T-cell (primary cell): ENCODE measurements at regions of chr2 and their contacts with region 1.

Region 1: GRCh38 chr2:27860111-27860510 is 30.1 kb downstream of the RBKS start:
- DNase-seq: no peak
- ATAC-seq: no peak
- H3K4me3 ChIP-seq: no peak overlapping the region
- H3K4me3 Mint-ChIP-seq: no peak overlapping the region
- H3K27ac ChIP-seq: no peak overlapping the region
- H3K27ac Mint-ChIP-seq: no peak overlapping the region
- H3K4me1 ChIP-seq: no peaks in the 10 kb centered on the region
- H3K4me1 Mint-ChIP-seq: peaks cover 0 to 13% (median 12%) of the 10 kb centered on the region in 3 donors
- H3K27me3 ChIP-seq: no peaks in the 10 kb centered on the region
- H3K27me3 Mint-ChIP-seq: no peaks in the 10 kb centered on the region

Region 2: GRCh38 chr2:27683390-27684071 is 176.6 kb before region 1 on chr2:
- CTCF ChIA-PET with region 1: no interaction called
- POLR2A ChIA-PET with region 1: no interaction called
- DNase-seq: peak; percentile 53 to 97 (median 81)
- ATAC-seq: peak; percentile 82 to 94 (median 90)
- H3K4me3 ChIP-seq: no peak overlapping the region
- H3K4me3 Mint-ChIP-seq: no peak overlapping the region
- H3K27ac ChIP-seq: peak overlapping the region; percentile 45
- H3K27ac Mint-ChIP-seq: peak overlapping the region; percentile 62 to 78
- H3K4me1 ChIP-seq: peaks cover 8 to 23% of the 10 kb centered on the region in 2 experiments
- H3K4me1 Mint-ChIP-seq: peaks cover 15 to 25% (median 15%) of the 10 kb centered on the region in 3 donors
- H3K27me3 ChIP-seq: no peaks in the 10 kb centered on the region
- H3K27me3 Mint-ChIP-seq: no peaks in the 10 kb centered on the region

Region 3: GRCh38 chr2:27798948-27799645 is 61.0 kb before region 1 on chr2:
- CTCF ChIA-PET with region 1: interaction called in 1 of 2 experiments, 10 read pairs
- POLR2A ChIA-PET with region 1: no interaction called
- DNase-seq: no peak
- ATAC-seq: no peak
- H3K4me3 ChIP-seq: no peak overlapping the region
- H3K4me3 Mint-ChIP-seq: no peak overlapping the region
- H3K27ac ChIP-seq: no peak overlapping the region
- H3K27ac Mint-ChIP-seq: no peak overlapping the region
- H3K4me1 ChIP-seq: no peaks in the 10 kb centered on the region
- H3K4me1 Mint-ChIP-seq: no peaks in the 10 kb centered on the region
- H3K27me3 ChIP-seq: no peaks in the 10 kb centered on the region
- H3K27me3 Mint-ChIP-seq: no peaks in the 10 kb centered on the region

Region 4: GRCh38 chr2:27838502-27838901 is 21.6 kb before region 1 on chr2:
- CTCF ChIA-PET with region 1: no interaction called
- POLR2A ChIA-PET with region 1: no interaction called
- DNase-seq: no peak
- ATAC-seq: no peak
- H3K4me3 ChIP-seq: no peak overlapping the region
- H3K4me3 Mint-ChIP-seq: no peak overlapping the region
- H3K27ac ChIP-seq: no peak overlapping the region
- H3K27ac Mint-ChIP-seq: no peak overlapping the region
- H3K4me1 ChIP-seq: no peaks in the 10 kb centered on the region
- H3K4me1 Mint-ChIP-seq: no peaks in the 10 kb centered on the region
- H3K27me3 ChIP-seq: no peaks in the 10 kb centered on the region
- H3K27me3 Mint-ChIP-seq: no peaks in the 10 kb centered on the region

Region 5: DNA sequence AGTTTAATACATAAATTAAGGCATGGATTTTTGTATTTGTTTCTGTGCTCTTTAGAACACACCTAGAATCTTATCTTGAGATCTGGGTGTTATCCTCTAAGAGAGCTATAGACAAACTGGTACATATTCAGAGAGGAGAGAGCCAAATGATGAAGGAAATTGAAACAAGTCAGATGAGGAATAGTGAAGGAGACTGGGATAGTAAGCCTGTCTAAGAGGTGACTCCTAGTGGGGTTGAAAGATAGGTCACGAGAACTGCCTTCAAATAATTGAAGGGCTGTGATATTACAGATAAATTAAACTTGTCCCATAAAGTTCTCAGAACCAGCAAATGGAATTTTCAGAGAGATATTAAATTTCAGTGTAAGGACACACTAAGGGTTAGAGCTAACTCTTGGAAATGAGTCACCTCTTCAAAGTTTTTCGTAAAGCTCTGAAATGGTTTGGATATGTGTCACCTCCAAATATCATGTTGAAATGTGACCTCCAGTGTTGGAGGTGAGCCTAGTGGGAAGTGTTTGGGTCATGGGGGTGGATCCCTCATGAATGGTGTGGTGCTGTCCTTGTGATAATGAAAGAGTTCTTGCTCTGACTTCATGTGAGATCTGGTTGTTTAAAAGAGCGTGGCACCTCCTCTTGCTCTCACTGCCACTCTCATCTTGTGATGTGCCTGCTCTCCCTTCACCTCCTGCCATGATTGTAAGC is 117.6 kb after region 1 on chr2:
- CTCF ChIA-PET with region 1: no interaction called
- POLR2A ChIA-PET with region 1: interaction called in 1 of 2 experiments, 10 read pairs
- DNase-seq: no peak
- ATAC-seq: no peak
- H3K4me3 ChIP-seq: no peak overlapping the region
- H3K4me3 Mint-ChIP-seq: no peak overlapping the region
- H3K27ac ChIP-seq: no peak overlapping the region
- H3K27ac Mint-ChIP-seq: peak overlapping the region; percentile 11 to 45
- H3K4me1 ChIP-seq: no peaks in the 10 kb centered on the region
- H3K4me1 Mint-ChIP-seq: peaks cover 23 to 25% (median 25%) of the 10 kb centered on the region in 3 donors
- H3K27me3 ChIP-seq: no peaks in the 10 kb centered on the region
- H3K27me3 Mint-ChIP-seq: no peaks in the 10 kb centered on the region